ENCODE measurements at regions of chr7 and their contacts with region 1.

Region 1: GRCh38 chr7:55255496-55256435 is 109.4 kb upstream of the LANCL2 start:
- DNase-seq: peak; percentile 75
- H3K4me3 ChIP-seq: peak overlapping the region; percentile 25 to 60 (median 54)
- H3K27ac ChIP-seq: no peak overlapping the region
- H3K4me1 ChIP-seq: peaks cover 16% of the 10 kb centered on the region
- H3K27me3 ChIP-seq: no peaks in the 10 kb centered on the region
- CTCF ChIP-seq: peak; percentile 83 to 95

Region 2: GRCh38 chr7:54758702-54759592 is 496.8 kb before region 1 on chr7 and contains the start of gene SEC61G:
- CTCF ChIA-PET with region 1: no interaction called
- dilution Hi-C with region 1: loop called (anchors 25 kb)
- in situ Hi-C with region 1: no loop called
- intact Hi-C with region 1: no loop called
- DNase-seq: peak; percentile 95
- H3K4me3 ChIP-seq: peak within 1 kb of the TSS; percentile 71 to 95 (median 90)
- H3K27ac ChIP-seq: peak within 1 kb of the TSS; percentile 96
- H3K4me1 ChIP-seq: peaks cover 11% of the 10 kb centered on the region
- H3K27me3 ChIP-seq: no peaks in the 10 kb centered on the region
- CTCF ChIP-seq: no peak
- total RNA-seq, gene SEC61G: 156 to 174 TPM

Region 3: DNA sequence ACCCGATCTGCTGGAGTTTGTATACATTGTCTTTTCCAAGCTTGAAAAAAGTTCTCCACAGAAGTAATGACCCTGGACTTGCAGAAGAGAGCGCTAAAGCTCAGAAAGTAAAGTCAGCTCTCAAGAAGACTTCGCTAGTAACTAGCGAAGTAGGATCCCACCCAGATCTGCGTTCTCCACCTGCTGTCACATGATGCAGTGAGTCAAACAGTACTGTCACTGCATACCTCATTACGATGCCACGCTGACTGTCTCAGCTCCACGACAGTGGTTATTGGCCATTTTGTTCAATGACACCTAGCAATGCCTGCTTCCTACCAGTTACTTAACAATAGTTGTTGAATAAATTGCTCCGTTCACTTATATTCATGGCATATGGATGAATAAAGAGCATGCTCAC is 467.1 kb before region 1 on chr7:
- CTCF ChIA-PET with region 1: interaction called, 3 read pairs
- dilution Hi-C with region 1: no loop called
- in situ Hi-C with region 1: no loop called
- intact Hi-C with region 1: loop called (anchors 1 kb)
- DNase-seq: peak; percentile 87
- H3K4me3 ChIP-seq: no peak overlapping the region
- H3K27ac ChIP-seq: peak overlapping the region; percentile 43
- H3K4me1 ChIP-seq: peaks cover 22% of the 10 kb centered on the region
- H3K27me3 ChIP-seq: no peaks in the 10 kb centered on the region
- CTCF ChIP-seq: peak; percentile 75 to 83

Region 4: GRCh38 chr7:54877683-54878082 is 378.1 kb before region 1 on chr7:
- CTCF ChIA-PET with region 1: no interaction called
- dilution Hi-C with region 1: no loop called
- in situ Hi-C with region 1: no loop called
- intact Hi-C with region 1: loop called (anchors 10 kb)
- DNase-seq: peak; percentile 40
- H3K4me3 ChIP-seq: no peak overlapping the region
- H3K27ac ChIP-seq: no peak overlapping the region
- H3K4me1 ChIP-seq: peaks cover 11% of the 10 kb centered on the region
- H3K27me3 ChIP-seq: no peaks in the 10 kb centered on the region
- CTCF ChIP-seq: peak in 1 of 2 donors; percentile 61

Region 5: DNA sequence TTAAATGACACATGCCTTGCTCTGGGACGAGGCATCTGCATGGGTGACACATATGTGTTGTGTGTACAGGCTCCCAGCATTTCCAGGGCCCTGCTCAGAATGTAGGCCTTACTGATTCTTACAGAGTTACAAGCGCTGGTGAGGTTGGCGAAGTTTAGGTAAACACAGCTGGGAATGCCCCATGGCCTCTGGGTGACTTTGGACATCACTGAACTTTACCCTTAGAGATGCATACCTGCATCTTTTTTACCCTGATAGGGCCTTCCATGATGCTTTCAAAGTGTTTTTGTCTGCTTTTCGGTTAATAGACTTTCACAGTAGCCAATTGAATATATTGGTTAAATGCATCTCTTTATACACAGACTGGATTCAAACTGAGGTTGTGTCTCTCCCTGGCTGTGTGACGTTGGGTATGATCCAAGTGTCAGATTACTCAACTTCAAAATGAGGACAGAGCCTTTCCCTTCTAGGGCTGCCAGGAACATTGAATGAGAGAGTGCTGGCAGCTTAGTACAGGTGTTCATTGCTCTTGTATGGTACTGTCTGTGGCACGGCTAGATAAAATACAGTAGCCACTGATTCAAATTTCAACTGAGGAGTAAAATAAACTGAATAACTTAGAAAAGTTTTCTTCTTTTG is 207.4 kb before region 1 on chr7:
- CTCF ChIA-PET with region 1: no interaction called
- dilution Hi-C with region 1: no loop called
- in situ Hi-C with region 1: loop called in 1 of 2 experiments (anchors 25 kb)
- intact Hi-C with region 1: no loop called
- DNase-seq: no peak
- H3K4me3 ChIP-seq: no peak overlapping the region
- H3K27ac ChIP-seq: peak overlapping the region; percentile 31
- H3K4me1 ChIP-seq: peaks cover 65% of the 10 kb centered on the region
- H3K27me3 ChIP-seq: no peaks in the 10 kb centered on the region
- CTCF ChIP-seq: no peak

Region 6: DNA sequence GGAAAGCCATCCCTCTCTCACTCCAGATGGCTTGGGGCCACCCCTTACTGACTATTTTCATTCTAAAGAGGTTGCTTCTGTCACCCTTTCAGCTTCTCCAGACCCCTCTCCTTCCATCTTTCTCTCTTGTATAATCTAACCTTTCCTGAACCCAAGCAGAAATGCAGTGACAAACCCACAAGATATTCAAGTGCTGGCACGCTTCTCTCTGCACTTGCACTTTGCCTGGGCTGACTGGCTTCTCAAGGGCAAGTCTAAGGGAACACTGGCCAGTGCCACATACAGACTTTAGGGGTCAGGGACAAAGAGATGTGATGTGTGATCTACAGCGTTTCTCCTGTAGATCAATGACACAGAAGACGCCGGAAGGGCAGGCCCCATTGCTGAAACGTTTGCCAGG is 41.1 kb before region 1 on chr7:
- CTCF ChIA-PET with region 1: interaction called, 3 read pairs
- dilution Hi-C with region 1: no loop called
- in situ Hi-C with region 1: no loop called
- intact Hi-C with region 1: loop called (anchors 2 kb)
- DNase-seq: no peak
- H3K4me3 ChIP-seq: no peak overlapping the region
- H3K27ac ChIP-seq: no peak overlapping the region
- H3K4me1 ChIP-seq: no peaks in the 10 kb centered on the region
- H3K27me3 ChIP-seq: no peaks in the 10 kb centered on the region
- CTCF ChIP-seq: no peak

Region 7: GRCh38 chr7:55493408-55493807 is 237.6 kb after region 1 on chr7:
- CTCF ChIA-PET with region 1: no interaction called
- dilution Hi-C with region 1: no loop called
- in situ Hi-C with region 1: no loop called
- intact Hi-C with region 1: no loop called
- DNase-seq: peak; percentile 74
- H3K4me3 ChIP-seq: no peak overlapping the region
- H3K27ac ChIP-seq: no peak overlapping the region
- H3K4me1 ChIP-seq: no peaks in the 10 kb centered on the region
- H3K27me3 ChIP-seq: no peaks in the 10 kb centered on the region
- CTCF ChIP-seq: no peak

Region 8: GRCh38 chr7:56092789-56093531 is 837.2 kb after region 1 on chr7 and contains the start of gene PHKG1:
- CTCF ChIA-PET with region 1: no interaction called
- dilution Hi-C with region 1: no loop called
- in situ Hi-C with region 1: no loop called
- intact Hi-C with region 1: no loop called
- DNase-seq: peak; percentile 42
- H3K4me3 ChIP-seq: no peak within 1 kb of the TSS
- H3K27ac ChIP-seq: no peak within 1 kb of the TSS
- H3K4me1 ChIP-seq: no peaks in the 10 kb centered on the region
- H3K27me3 ChIP-seq: no peaks in the 10 kb centered on the region
- CTCF ChIP-seq: peak; percentile 53 to 65
- total RNA-seq, gene PHKG1: 0.28 to 0.33 TPM